Adrenal gland (tissue), 19 donors: ENCODE measurements at regions of chrX and their contacts with region 1.

Region 1: DNA sequence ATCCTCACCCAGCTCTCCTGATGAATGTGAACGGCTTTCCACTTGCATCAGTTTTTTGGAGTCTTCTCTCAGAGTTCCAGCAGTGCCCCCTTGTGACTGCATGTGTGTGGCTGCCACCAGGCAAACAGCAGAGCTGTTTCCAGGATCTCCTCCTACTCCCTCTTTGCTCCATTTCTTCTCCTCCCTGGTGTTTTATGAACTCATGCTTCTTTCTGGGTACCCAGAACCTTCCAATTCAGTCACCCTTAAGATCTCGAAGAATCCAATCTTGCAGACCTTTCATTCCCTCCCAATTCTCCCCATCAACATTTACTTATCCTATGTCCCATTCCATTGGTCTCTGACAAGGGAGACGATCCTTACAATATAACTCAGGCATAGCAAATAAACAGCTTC is 6.8 kb upstream of the TCEANC start:
- DNase-seq: peak; percentile 56 to 81 (median 70)
- H3K4me3 ChIP-seq: no peak overlapping the region
- H3K27ac ChIP-seq: no peak overlapping the region
- H3K4me1 ChIP-seq: peaks cover 0 to 5% of the 10 kb centered on the region in 2 donors
- H3K27me3 ChIP-seq: peaks cover 4% of the 10 kb centered on the region
- CTCF ChIP-seq: peak in 5 of 6 experiments; percentile 39 to 60 (median 57)
- POLR2A ChIP-seq: no peak

Region 2: DNA sequence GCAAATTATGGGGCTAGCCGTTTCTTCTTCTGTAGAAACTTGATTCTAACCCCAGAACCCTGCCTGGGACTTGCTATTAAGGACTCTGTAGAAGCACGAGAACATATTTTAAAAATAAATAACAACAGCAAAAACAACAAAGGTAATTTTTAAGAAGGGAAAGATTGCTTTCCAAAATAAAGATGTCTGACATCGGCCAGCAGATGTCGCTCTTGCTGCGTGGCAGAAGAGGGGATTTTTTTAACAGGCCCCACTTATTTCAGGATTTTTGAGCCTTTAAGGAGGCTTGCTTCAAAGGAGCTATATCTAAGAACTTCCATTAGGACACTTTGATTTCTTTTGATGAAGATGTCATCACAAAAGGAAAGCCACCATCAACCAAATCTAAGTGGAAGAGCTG is 139.6 kb before region 1 on chrX:
- intact Hi-C with region 1: loop called (anchors 5 to 10 kb)
- DNase-seq: peak in 6 of 7 donors; percentile 27 to 62 (median 38)
- H3K4me3 ChIP-seq: no peak overlapping the region
- H3K27ac ChIP-seq: no peak overlapping the region
- H3K4me1 ChIP-seq: no peaks in the 10 kb centered on the region
- H3K27me3 ChIP-seq: peaks cover 2% of the 10 kb centered on the region
- CTCF ChIP-seq: peak; percentile 58 to 87 (median 73)
- POLR2A ChIP-seq: no peak

Region 3: GRCh38 chrX:13825178-13825762 is 179.1 kb after region 1 on chrX:
- intact Hi-C with region 1: no loop called
- DNase-seq: peak in 2 of 7 donors; percentile 2 to 14
- H3K4me3 ChIP-seq: no peak overlapping the region
- H3K27ac ChIP-seq: no peak overlapping the region
- H3K4me1 ChIP-seq: no peaks in the 10 kb centered on the region
- H3K27me3 ChIP-seq: peaks cover 34% of the 10 kb centered on the region
- CTCF ChIP-seq: no peak
- POLR2A ChIP-seq: no peak

Region 4: DNA sequence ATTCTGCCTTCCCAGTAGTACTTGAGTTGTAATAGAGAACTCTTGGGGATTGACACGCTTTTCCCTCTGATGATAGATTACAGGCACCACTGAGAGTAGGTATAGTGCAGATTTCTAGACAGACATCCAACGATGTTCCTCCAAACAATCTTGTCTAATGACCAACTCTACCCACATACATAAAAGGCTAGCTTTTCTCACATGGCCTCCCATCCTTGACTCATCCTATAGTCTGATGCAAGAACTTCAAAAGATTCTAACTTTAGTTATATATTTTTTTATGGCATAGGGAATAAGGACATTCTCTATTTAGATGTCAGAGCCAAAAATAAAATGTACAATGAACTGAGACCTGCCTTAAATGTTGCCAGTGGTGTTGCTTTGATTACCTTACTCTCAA is 944.1 kb after region 1 on chrX:
- intact Hi-C with region 1: no loop called
- DNase-seq: no peak
- H3K4me3 ChIP-seq: no peak overlapping the region
- H3K27ac ChIP-seq: no peak overlapping the region
- H3K4me1 ChIP-seq: no peaks in the 10 kb centered on the region
- H3K27me3 ChIP-seq: no peaks in the 10 kb centered on the region
- CTCF ChIP-seq: no peak
- POLR2A ChIP-seq: no peak